ENCODE measurements at regions of chr12 and their contacts with region 1.

Region 1: GRCh38 chr12:20601668-20602280 is 93.4 kb upstream of the SLCO1C1 start:
- DNase-seq: no peak
- H3K4me3 ChIP-seq: no peak overlapping the region
- H3K27ac ChIP-seq: no peak overlapping the region
- H3K4me1 ChIP-seq: no peaks in the 10 kb centered on the region
- H3K27me3 ChIP-seq: no peaks in the 10 kb centered on the region
- CTCF ChIP-seq: peak; percentile 14 to 46

Region 2: DNA sequence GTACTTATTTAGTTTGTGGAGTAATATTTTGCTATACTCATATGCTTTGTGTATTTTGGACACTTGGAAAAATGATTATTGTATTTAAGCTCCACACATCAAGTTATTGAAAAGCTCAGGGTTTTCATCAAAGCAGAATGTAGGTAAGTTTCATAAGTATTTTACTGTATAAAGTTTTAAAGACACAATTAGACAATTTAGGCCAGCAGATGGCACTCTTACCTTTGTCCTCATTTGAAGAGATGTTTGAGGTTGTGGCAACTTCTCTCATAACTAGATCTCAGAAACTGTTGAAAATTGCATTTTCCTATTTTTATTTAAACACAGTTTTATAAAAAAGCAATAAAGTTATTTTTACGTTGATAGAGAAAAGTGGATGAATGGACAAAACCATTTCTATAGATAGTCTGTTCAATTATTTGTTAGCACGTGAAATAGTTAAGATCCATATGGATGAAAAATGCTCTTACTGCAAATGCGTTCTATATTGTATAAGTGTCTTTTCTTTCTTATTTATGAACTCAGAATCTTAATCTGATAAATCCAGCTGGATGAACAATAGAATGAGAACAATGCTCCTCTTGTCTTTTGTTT is 862.5 kb before region 1 on chr12:
- CTCF ChIA-PET with region 1: no interaction called
- dilution Hi-C with region 1: no loop called
- in situ Hi-C with region 1: no loop called
- intact Hi-C with region 1: loop called (anchors 5 kb)
- DNase-seq: peak; percentile 33
- H3K4me3 ChIP-seq: no peak overlapping the region
- H3K27ac ChIP-seq: no peak overlapping the region
- H3K4me1 ChIP-seq: no peaks in the 10 kb centered on the region
- H3K27me3 ChIP-seq: peaks cover 2% of the 10 kb centered on the region
- CTCF ChIP-seq: peak; percentile 29 to 63

Region 3: DNA sequence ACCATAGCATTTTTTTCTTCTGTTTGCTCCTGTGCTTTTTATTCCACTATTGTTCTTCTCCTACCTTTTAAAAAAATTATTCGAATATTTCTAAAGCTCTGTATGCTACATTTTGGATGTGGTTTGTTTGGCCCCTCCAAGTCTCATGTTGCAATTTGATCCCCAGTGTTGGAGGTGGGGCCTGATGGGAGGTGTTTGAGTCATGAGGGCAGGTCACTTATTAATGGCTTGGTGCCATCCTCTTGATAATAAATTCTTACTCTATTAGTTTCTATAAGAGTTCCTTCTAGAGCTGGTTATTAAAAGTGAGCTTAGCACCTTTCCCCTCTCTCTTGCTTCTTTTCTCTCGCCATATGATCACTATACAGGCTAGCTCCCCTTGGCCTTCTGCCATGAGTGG is 679.1 kb before region 1 on chr12:
- CTCF ChIA-PET with region 1: no interaction called
- dilution Hi-C with region 1: no loop called
- in situ Hi-C with region 1: no loop called
- intact Hi-C with region 1: loop called (anchors 10 kb)
- DNase-seq: no peak
- H3K4me3 ChIP-seq: no peak overlapping the region
- H3K27ac ChIP-seq: no peak overlapping the region
- H3K4me1 ChIP-seq: no peaks in the 10 kb centered on the region
- H3K27me3 ChIP-seq: no peaks in the 10 kb centered on the region
- CTCF ChIP-seq: no peak

Region 4: GRCh38 chr12:20426191-20426590 is 175.6 kb before region 1 on chr12:
- CTCF ChIA-PET with region 1: no interaction called
- dilution Hi-C with region 1: no loop called
- in situ Hi-C with region 1: no loop called
- intact Hi-C with region 1: no loop called
- DNase-seq: no peak
- H3K4me3 ChIP-seq: no peak overlapping the region
- H3K27ac ChIP-seq: no peak overlapping the region
- H3K4me1 ChIP-seq: no peaks in the 10 kb centered on the region
- H3K27me3 ChIP-seq: no peaks in the 10 kb centered on the region
- CTCF ChIP-seq: no peak

Region 5: DNA sequence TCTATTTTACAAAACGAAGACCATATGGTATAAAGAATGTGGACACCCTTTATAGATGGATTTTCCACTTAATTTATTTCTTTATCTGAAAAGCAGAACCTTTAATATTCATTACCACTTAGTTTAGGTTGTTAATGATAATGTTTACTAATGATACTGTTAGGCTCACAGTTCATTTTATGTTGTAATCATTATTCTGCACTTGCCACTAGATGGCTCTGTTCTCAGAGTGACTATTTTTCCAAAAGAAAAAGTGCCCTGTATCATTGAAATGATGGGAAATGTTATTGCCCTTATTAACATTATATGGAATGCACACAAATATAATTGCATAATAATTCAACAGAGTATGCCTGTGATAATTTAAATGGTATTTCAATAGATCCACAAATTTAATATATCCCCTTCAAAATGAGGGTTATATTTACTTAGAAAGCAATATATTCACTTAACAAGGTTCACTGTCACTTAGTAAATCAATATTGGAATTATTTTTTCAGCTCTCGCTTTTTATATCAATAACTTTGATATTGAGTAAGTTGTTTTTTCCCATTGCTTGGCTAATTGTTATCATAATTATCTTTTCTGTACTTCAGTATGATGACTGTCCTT is 137.8 kb before region 1 on chr12:
- CTCF ChIA-PET with region 1: no interaction called
- dilution Hi-C with region 1: no loop called
- in situ Hi-C with region 1: no loop called
- intact Hi-C with region 1: loop called (anchors 5 kb)
- DNase-seq: no peak
- H3K4me3 ChIP-seq: no peak overlapping the region
- H3K27ac ChIP-seq: no peak overlapping the region
- H3K4me1 ChIP-seq: no peaks in the 10 kb centered on the region
- H3K27me3 ChIP-seq: no peaks in the 10 kb centered on the region
- CTCF ChIP-seq: peak; percentile 50 to 61

Region 6: DNA sequence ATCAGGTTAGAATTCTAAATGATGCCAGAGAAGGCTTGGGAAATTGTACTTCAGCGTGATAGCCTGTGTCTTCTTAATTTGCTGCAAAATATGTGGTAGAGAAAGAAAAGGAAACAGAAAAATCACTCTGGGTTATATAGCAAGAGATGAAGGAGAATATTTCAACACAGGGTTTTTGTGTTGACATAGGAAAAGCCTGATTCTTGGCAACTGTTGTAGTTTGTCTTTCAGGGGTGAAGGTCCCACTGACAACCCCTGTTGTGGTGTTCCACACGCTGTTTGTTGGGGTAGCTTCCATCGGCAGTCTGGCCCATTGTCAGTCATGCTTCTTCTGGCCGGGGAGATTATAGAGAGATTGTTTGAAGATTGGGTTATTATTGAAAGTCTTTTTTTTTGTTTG is 79.6 kb after region 1 on chr12:
- CTCF ChIA-PET with region 1: no interaction called
- dilution Hi-C with region 1: no loop called
- in situ Hi-C with region 1: no loop called
- intact Hi-C with region 1: no loop called
- DNase-seq: no peak
- H3K4me3 ChIP-seq: no peak overlapping the region
- H3K27ac ChIP-seq: no peak overlapping the region
- H3K4me1 ChIP-seq: no peaks in the 10 kb centered on the region
- H3K27me3 ChIP-seq: no peaks in the 10 kb centered on the region
- CTCF ChIP-seq: no peak

Region 7: DNA sequence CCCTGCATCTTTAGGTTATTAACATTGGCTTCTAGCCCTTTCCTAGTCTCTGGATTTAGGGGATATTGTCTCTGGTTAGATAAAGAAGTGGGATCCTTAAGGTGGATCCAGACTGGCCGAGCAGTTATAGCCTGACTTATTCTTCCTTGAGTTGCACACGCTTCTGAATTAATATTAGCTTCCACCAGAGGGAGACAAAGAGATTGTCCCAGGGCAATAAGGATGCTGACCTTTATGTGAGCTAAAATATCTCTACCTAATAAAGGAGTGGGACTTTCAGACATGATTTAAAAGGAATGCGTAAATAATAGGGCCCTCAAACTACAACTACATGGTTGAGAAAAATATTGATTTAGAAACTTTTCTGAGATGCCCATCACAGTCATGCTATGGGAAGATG is 348.5 kb after region 1 on chr12:
- CTCF ChIA-PET with region 1: no interaction called
- dilution Hi-C with region 1: no loop called
- in situ Hi-C with region 1: no loop called
- intact Hi-C with region 1: no loop called
- DNase-seq: peak; percentile 9
- H3K4me3 ChIP-seq: no peak overlapping the region
- H3K27ac ChIP-seq: no peak overlapping the region
- H3K4me1 ChIP-seq: no peaks in the 10 kb centered on the region
- H3K27me3 ChIP-seq: no peaks in the 10 kb centered on the region
- CTCF ChIP-seq: peak; percentile 29 to 42